Gastrocnemius medialis (tissue), 4 donors: ENCODE measurements at regions of chr12 and their contacts with region 1.

Region 1: GRCh38 chr12:10212201-10213131 is at the start of gene GABARAPL1:
- DNase-seq: peak; percentile 97 to 99
- ATAC-seq: peak; percentile 85 to 86
- H3K4me3 ChIP-seq: peak within 1 kb of the TSS; percentile 75 to 96 (median 88)
- H3K27ac ChIP-seq: peak within 1 kb of the TSS; percentile 98 to 100 (median 98)
- H3K4me1 ChIP-seq: peaks cover 15 to 22% of the 10 kb centered on the region in 2 donors
- H3K27me3 ChIP-seq: no peaks in the 10 kb centered on the region
- CTCF ChIP-seq: no peak
- POLR2A ChIP-seq: peak; percentile 80 to 93
- total RNA-seq, gene GABARAPL1: 144 to 605 (median 175) TPM

Region 2: DNA sequence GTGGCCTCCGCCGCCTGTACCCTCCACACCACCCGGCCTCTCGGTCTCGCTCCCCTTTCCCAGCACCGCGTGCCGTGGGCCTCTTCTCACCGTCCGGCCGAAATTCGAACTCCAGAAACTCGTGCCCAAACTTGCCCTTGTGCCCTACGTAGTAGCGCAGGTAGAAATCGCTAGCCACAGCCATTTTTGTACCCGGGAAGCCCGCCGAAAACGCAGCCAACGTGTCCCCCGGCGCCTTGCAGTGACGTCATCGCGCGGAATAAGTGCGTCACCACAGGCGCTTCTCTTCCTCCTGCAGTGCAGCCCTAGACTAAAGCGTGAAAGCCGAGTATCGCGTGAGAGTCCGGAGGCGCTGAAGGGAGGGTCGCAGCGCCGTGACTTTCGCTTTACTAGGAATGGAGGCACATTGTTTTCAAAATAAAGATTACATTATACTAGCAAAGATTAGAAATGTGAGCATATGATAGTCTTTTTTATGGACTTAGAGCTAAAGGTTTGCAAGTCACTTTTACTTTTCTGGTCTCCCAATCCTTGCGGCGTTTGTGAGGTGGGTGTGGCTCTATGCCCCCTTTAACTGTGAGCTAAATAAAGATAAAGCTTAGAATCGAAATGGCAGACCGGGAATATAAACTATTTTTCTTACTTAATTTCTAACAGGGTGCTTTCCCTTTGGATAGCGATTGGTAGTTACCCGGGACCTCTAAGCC is 401.0 kb after region 1 on chr12 and contains the start of gene MAGOHB:
- in situ Hi-C with region 1: no loop called
- intact Hi-C with region 1: loop called (anchors 5 kb)
- DNase-seq: peak; percentile 82 to 93
- ATAC-seq: peak; percentile 98 to 99
- H3K4me3 ChIP-seq: peak within 1 kb of the TSS; percentile 68 to 89 (median 79)
- H3K27ac ChIP-seq: peak within 1 kb of the TSS; percentile 90 to 91 (median 90)
- H3K4me1 ChIP-seq: peaks cover 12 to 16% of the 10 kb centered on the region in 2 donors
- H3K27me3 ChIP-seq: no peaks in the 10 kb centered on the region
- CTCF ChIP-seq: peak in 2 of 5 experiments; percentile 49 to 52
- POLR2A ChIP-seq: peak; percentile 51 to 82
- total RNA-seq, gene MAGOHB: 0.80 to 6.3 (median 3.8) TPM

Region 3: DNA sequence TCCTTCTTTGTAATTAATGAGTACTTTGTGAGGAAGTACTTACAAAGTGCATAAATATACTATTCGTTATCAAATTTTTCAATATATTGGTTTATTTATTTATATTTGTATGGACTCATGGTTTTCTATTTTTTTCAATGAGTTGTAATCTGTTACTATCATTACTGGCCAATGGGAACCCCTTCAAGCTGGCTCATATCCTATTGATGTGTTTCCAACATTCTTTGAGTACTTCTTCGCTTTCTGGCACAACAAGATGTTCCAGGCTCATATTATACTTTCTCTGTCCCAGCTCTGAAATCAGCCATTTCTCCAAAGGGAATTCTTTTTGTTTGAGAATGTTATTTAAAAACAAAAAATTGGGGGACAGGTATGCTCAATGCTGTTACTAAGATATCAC is 493.2 kb after region 1 on chr12:
- in situ Hi-C with region 1: loop called in 3 of 4 experiments (anchors 5 to 25 kb)
- intact Hi-C with region 1: no loop called
- DNase-seq: no peak
- ATAC-seq: peak; percentile 61
- H3K4me3 ChIP-seq: peak overlapping the region in 2 of 4 donors; percentile 20 to 27
- H3K27ac ChIP-seq: peak overlapping the region; percentile 97 to 100 (median 98)
- H3K4me1 ChIP-seq: peaks cover 63 to 80% of the 10 kb centered on the region in 2 donors
- H3K27me3 ChIP-seq: no peaks in the 10 kb centered on the region
- CTCF ChIP-seq: no peak
- POLR2A ChIP-seq: no peak

Region 4: GRCh38 chr12:10716704-10717315 is 504.3 kb after region 1 on chr12:
- in situ Hi-C with region 1: loop called in 3 of 4 experiments (anchors 5 to 25 kb)
- intact Hi-C with region 1: loop called (anchors 1 kb)
- DNase-seq: peak; percentile 91 to 92
- ATAC-seq: peak; percentile 60 to 63
- H3K4me3 ChIP-seq: peak overlapping the region; percentile 62 to 99 (median 87)
- H3K27ac ChIP-seq: peak overlapping the region; percentile 97 to 100 (median 98)
- H3K4me1 ChIP-seq: peaks cover 48 to 68% of the 10 kb centered on the region in 2 donors
- H3K27me3 ChIP-seq: no peaks in the 10 kb centered on the region
- CTCF ChIP-seq: no peak
- POLR2A ChIP-seq: peak; percentile 75 to 95

Region 5: DNA sequence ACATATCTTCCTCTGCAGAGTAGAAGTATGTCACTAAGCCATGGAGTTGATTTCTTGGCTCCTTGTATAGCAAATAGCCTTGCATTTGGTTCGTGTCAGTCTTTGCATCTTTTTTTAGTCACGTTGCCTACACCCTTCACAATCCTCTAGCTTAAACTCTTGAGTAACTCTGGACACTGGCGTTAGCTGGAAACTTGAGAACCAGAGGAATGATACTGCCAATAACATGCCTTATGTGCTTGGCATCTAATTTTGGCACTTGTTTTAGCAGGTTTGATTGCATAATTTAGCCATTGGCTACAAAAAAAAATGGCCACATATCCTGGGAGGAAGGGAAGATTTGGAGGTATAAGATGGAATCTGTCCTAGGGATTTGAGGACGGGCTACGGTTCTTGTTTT is 1573.2 kb after region 1 on chr12:
- in situ Hi-C with region 1: loop called in 1 of 4 experiments (anchors 25 kb)
- intact Hi-C with region 1: loop called (anchors 5 kb)
- DNase-seq: peak; percentile 55 to 68
- ATAC-seq: peak; percentile 97
- H3K4me3 ChIP-seq: no peak overlapping the region
- H3K27ac ChIP-seq: peak overlapping the region; percentile 80 to 86 (median 84)
- H3K4me1 ChIP-seq: peaks cover 28 to 40% of the 10 kb centered on the region in 2 donors
- H3K27me3 ChIP-seq: no peaks in the 10 kb centered on the region
- CTCF ChIP-seq: no peak
- POLR2A ChIP-seq: no peak

Region 6: GRCh38 chr12:11798856-11799501 is 1586.5 kb after region 1 on chr12:
- in situ Hi-C with region 1: loop called in 1 of 4 experiments (anchors 25 kb)
- intact Hi-C with region 1: no loop called
- DNase-seq: no peak
- ATAC-seq: no peak
- H3K4me3 ChIP-seq: no peak overlapping the region
- H3K27ac ChIP-seq: peak overlapping the region in 1 of 4 donors; percentile 85
- H3K4me1 ChIP-seq: peaks cover 45 to 46% of the 10 kb centered on the region in 2 donors
- H3K27me3 ChIP-seq: no peaks in the 10 kb centered on the region
- CTCF ChIP-seq: no peak
- POLR2A ChIP-seq: no peak